GM10248 (cell line): ENCODE measurements at regions of chr6 and their contacts with region 1.

Region 1: GRCh38 chr6:7086488-7086887 is 21.3 kb upstream of the RREB1 start:
- DNase-seq: peak; percentile 58
- CTCF ChIP-seq: peak; percentile 49

Region 2: GRCh38 chr6:7073821-7074525 is 12.5 kb before region 1 on chr6:
- CTCF ChIA-PET with region 1: interaction called, 4 read pairs
- POLR2A ChIA-PET with region 1: interaction called, 10 read pairs
- DNase-seq: peak; percentile 91
- CTCF ChIP-seq: no peak

Region 3: GRCh38 chr6:7100072-7100752 is 13.7 kb after region 1 on chr6:
- CTCF ChIA-PET with region 1: interaction called, 28 read pairs
- POLR2A ChIA-PET with region 1: no interaction called
- DNase-seq: peak; percentile 53
- CTCF ChIP-seq: no peak

Region 4: DNA sequence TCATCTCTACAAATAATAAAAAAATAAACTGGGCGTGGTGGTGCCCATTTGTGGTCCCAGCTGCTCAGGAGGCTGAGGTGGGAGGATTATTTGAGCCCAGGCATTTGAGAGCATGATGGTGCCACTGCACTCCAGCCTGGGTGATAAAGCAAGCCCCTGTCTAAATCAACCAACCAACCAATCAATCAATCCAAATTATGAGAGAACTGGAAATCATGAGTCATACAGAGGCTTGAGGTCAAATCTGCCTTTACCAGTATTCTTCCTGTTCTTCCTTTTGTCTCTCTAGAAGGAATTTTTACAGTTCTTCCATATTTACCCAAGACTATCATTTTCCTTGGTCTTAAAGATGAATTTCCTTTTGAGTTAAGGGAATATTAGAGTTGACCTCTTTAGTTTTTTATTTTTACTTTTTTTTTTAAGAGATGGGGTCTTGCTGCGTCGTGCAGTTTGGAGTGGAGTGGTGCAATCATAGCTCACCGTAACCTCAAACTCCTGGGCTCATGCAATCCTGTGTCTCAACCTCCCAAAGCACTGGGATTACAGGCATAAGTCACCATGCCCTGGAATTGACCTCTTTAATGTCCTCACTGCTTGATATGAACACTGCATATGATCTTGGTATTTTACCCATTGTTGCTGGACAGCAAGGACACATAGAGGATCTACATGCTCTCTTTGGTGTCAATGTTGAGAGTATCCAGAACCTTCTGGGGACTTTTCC is 868.2 kb after region 1 on chr6:
- CTCF ChIA-PET with region 1: no interaction called
- POLR2A ChIA-PET with region 1: no interaction called
- DNase-seq: no peak
- CTCF ChIP-seq: no peak